Activated CD4-positive, alpha-beta memory T cell treated with anti-CD3 and anti-CD28 coated beads for 36 hours (primary cell): ENCODE measurements at regions of chr1 and their contacts with region 1.

Region 1: GRCh38 chr1:26700711-26701110 is 4.9 kb downstream of the ARID1A start:
- DNase-seq: peak; percentile 31
- H3K4me3 Mint-ChIP-seq: no peak overlapping the region
- H3K27ac Mint-ChIP-seq: no peak overlapping the region
- H3K4me1 Mint-ChIP-seq: peaks cover 8% of the 10 kb centered on the region
- H3K27me3 Mint-ChIP-seq: no peaks in the 10 kb centered on the region

Region 2: GRCh38 chr1:26582836-26583460 is 117.8 kb before region 1 on chr1:
- CTCF ChIA-PET with region 1: no interaction called
- POLR2A ChIA-PET with region 1: interaction called, 7 read pairs
- intact Hi-C with region 1: loop called (anchors 1 kb)
- DNase-seq: peak; percentile 94
- H3K4me3 Mint-ChIP-seq: no peak overlapping the region
- H3K27ac Mint-ChIP-seq: peak overlapping the region; percentile 73
- H3K4me1 Mint-ChIP-seq: peaks cover 47% of the 10 kb centered on the region
- H3K27me3 Mint-ChIP-seq: no peaks in the 10 kb centered on the region

Region 3: DNA sequence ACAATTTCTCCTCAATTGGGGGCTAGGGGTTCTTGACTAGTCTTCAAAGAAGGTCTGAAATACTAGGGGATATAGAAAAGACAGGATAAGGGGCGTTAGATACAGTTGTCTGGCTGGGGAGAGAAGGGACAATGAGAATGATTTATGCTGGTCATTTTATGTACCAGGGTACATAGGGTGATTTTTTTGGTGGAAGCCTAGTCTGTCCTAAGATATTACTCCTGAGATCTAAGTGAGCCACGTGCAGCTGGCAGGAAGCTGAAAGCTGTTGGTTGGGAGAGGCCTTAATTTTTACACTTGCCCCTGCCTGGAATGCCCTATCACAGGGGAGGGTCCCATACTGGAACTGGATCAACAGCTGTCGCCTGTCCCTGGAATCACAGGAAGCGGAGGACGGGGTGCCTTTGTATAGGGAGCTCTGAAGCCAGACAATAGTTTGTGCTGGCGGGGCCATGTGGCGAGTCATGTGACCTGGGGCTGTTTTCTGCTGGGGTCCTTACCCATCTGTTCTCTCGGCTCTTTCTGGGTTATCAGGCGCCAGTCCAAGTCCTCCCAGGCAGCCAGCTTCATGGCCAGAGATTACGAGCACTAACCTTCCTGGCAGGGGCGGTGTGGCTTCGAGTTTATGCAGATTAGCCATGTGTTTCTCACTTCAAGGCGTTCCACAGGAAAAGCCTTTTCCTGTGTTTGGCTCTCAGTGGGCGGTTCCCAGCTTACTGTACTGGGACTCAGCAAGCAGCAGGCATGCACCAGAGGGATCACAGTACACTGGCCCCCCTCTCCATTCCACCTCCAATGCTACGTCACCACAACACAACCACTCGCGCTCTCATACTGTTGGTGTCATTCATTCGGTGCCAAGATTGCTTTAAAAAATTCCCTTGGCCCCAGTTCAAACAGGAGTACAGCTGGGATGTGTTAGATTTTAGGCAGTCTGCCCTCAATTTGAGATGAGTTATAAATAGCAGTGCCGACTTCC is 22.6 kb after region 1 on chr1:
- CTCF ChIA-PET with region 1: interaction called, 7 read pairs
- POLR2A ChIA-PET with region 1: interaction called, 9 read pairs
- intact Hi-C with region 1: loop called (anchors 1 kb)
- DNase-seq: peak; percentile 61
- H3K4me3 Mint-ChIP-seq: no peak overlapping the region
- H3K27ac Mint-ChIP-seq: peak overlapping the region; percentile 70
- H3K4me1 Mint-ChIP-seq: peaks cover 89% of the 10 kb centered on the region
- H3K27me3 Mint-ChIP-seq: no peaks in the 10 kb centered on the region

Region 4: DNA sequence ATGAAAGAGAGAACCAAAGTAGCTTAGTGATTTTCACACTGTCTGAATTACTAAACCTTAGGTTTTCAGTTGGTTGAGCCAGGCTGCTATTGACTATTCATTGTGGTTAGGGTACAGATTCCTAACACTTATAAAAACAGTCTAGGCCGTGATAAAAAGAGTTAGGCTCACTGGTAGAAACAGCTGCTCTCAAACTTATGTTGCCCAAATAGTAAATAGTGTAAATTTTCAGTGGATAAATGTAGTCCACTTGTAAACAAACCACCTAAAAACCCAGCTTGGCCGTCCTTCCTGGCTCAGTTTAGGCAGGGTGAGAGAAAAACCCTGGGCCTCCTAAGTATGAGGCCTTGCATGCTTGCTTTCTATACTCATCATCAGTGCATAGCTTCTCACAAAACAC is 30.0 kb after region 1 on chr1:
- CTCF ChIA-PET with region 1: interaction called, 3 read pairs
- POLR2A ChIA-PET with region 1: interaction called, 11 read pairs
- intact Hi-C with region 1: no loop called
- DNase-seq: no peak
- H3K4me3 Mint-ChIP-seq: no peak overlapping the region
- H3K27ac Mint-ChIP-seq: peak overlapping the region; percentile 69
- H3K4me1 Mint-ChIP-seq: peaks cover 91% of the 10 kb centered on the region
- H3K27me3 Mint-ChIP-seq: no peaks in the 10 kb centered on the region

Region 5: GRCh38 chr1:26744075-26744959 is 43.6 kb after region 1 on chr1:
- CTCF ChIA-PET with region 1: interaction called, 13 read pairs
- POLR2A ChIA-PET with region 1: interaction called, 91 read pairs
- intact Hi-C with region 1: loop called (anchors 1 kb)
- DNase-seq: peak; percentile 91
- H3K4me3 Mint-ChIP-seq: peak overlapping the region; percentile 48
- H3K27ac Mint-ChIP-seq: peak overlapping the region; percentile 92
- H3K4me1 Mint-ChIP-seq: peaks cover 83% of the 10 kb centered on the region
- H3K27me3 Mint-ChIP-seq: no peaks in the 10 kb centered on the region